ENCODE measurements at regions of chr12 and their contacts with region 1.

Region 1: DNA sequence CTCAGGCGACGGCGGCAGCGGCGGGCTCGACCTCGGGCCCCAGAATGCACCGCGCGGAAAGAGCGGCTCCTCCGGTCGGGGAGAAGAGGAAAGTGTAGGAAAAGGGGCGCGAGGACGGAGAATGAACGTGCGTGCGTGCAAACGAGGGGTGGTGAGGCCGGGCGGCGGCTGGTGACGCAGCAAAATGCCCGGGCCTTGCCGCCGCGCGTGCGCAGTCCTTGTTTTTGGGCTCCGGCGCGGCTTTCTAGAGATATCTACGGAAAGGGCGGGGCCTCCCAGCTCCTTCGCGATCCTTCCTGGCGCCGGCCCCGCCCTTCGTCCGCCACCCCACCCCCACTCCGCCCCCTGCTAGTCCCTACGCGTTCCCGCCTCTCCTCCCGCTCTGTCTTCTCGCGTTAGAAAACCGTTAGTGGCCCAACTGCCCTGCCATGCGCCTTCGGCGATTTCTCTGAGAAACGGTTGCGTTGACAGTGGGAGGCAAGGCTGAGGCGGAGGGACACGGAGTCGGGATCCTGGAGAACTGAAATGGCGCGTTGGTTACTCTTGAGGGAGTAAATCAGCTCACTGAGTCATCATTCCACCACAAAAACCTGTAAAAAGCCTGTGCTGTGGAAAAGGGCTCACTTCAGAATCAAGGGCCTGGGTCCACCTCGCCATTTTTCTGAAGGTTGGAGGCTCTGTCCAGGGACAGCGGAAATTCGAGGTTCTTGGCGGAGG is at the start of gene PTGES3:
- DNase-seq: peak; percentile 99
- H3K4me3 ChIP-seq: peak within 1 kb of the TSS; percentile 80 to 98 (median 96)
- H3K27ac ChIP-seq: peak within 1 kb of the TSS; percentile 99 to 100 (median 100)
- H3K4me1 ChIP-seq: peaks cover 21 to 49% (median 41%) of the 10 kb centered on the region in 4 donors
- H3K27me3 ChIP-seq: no peaks in the 10 kb centered on the region
- CTCF ChIP-seq: peak in 1 of 3 experiments; percentile 24
- EP300 ChIP-seq: no peak
- POLR2A ChIP-seq: peak; percentile 86
- total RNA-seq, gene PTGES3: 86.8 to 118 (median 92.0) TPM

Region 2: GRCh38 chr12:56645717-56646446 is 42.4 kb before region 1 on chr12 and contains the start of gene ATP5F1B:
- intact Hi-C with region 1: loop called (anchors 5 kb)
- DNase-seq: peak; percentile 98
- H3K4me3 ChIP-seq: peak within 1 kb of the TSS; percentile 61 to 98 (median 76)
- H3K27ac ChIP-seq: peak within 1 kb of the TSS; percentile 85 to 96 (median 90)
- H3K4me1 ChIP-seq: peaks cover 30 to 52% (median 47%) of the 10 kb centered on the region in 4 donors
- H3K27me3 ChIP-seq: no peaks in the 10 kb centered on the region
- CTCF ChIP-seq: peak in 1 of 3 experiments; percentile 39
- EP300 ChIP-seq: no peak
- POLR2A ChIP-seq: peak; percentile 96
- total RNA-seq, gene ATP5F1B: 383 to 465 (median 424) TPM

Region 3: GRCh38 chr12:56724972-56725722 is 36.9 kb after region 1 on chr12 and contains the start of gene NACA:
- intact Hi-C with region 1: loop called (anchors 1 kb)
- DNase-seq: peak; percentile 99
- H3K4me3 ChIP-seq: peak within 1 kb of the TSS; percentile 83 to 96 (median 86)
- H3K27ac ChIP-seq: peak within 1 kb of the TSS; percentile 91 to 95 (median 92)
- H3K4me1 ChIP-seq: peaks cover 42 to 51% (median 49%) of the 10 kb centered on the region in 4 donors
- H3K27me3 ChIP-seq: no peaks in the 10 kb centered on the region
- CTCF ChIP-seq: peak in 1 of 3 experiments; percentile 9
- EP300 ChIP-seq: no peak
- POLR2A ChIP-seq: peak; percentile 96
- total RNA-seq, gene NACA: 913 to 1,477 (median 1,221) TPM

Measured in esophagus muscularis mucosa (tissue), 4 donors.